CD8-positive, alpha-beta T cell (primary cell): ENCODE measurements at regions of chr9 and their contacts with region 1.

Region 1: GRCh38 chr9:114681594-114682332 is at the start of gene TEX48:
- DNase-seq: peak; percentile 48 to 89 (median 74)
- ATAC-seq: peak; percentile 89
- H3K4me3 ChIP-seq: no peak within 1 kb of the TSS
- H3K4me3 Mint-ChIP-seq: peak within 1 kb of the TSS; percentile 30
- H3K27ac ChIP-seq: no peak within 1 kb of the TSS
- H3K27ac Mint-ChIP-seq: peak within 1 kb of the TSS; percentile 25
- H3K4me1 ChIP-seq: peaks cover 5% of the 10 kb centered on the region
- H3K4me1 Mint-ChIP-seq: peaks cover 13% of the 10 kb centered on the region
- H3K27me3 ChIP-seq: peaks cover 0 to under 1% of the 10 kb centered on the region in 2 experiments
- H3K27me3 Mint-ChIP-seq: peaks cover 5% of the 10 kb centered on the region
- CTCF ChIP-seq: peak; percentile 58
- total RNA-seq, gene TEX48: not detected

Region 2: DNA sequence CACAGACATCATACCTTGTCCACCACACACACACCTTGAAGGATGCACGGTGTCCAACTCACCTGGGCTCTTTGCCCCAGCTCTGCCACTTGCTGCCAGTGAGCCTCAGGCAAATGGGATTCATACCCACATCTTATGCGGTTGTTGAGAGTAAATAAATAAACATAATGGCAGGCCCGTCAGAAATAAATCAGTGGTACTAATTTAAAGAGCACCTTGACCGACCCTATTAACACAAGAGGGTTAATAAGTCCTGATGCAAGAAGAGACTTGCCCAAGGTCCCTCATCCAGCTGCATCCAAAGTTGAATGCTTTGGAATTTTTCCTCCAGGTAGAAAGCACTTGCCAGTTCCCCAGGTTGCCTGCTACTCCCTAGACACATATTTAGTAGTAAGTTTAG is 282.4 kb before region 1 on chr9:
- CTCF ChIA-PET with region 1: no interaction called
- POLR2A ChIA-PET with region 1: no interaction called
- intact Hi-C with region 1: no loop called
- DNase-seq: no peak
- ATAC-seq: no peak
- H3K4me3 ChIP-seq: no peak overlapping the region
- H3K4me3 Mint-ChIP-seq: peak overlapping the region; percentile 15
- H3K27ac ChIP-seq: no peak overlapping the region
- H3K27ac Mint-ChIP-seq: no peak overlapping the region
- H3K4me1 ChIP-seq: peaks cover 33% of the 10 kb centered on the region
- H3K4me1 Mint-ChIP-seq: peaks cover 37% of the 10 kb centered on the region
- H3K27me3 ChIP-seq: no peaks in the 10 kb centered on the region
- H3K27me3 Mint-ChIP-seq: no peaks in the 10 kb centered on the region
- CTCF ChIP-seq: no peak

Region 3: GRCh38 chr9:114671605-114672004 is 10.2 kb before region 1 on chr9:
- CTCF ChIA-PET with region 1: interaction called, 21 read pairs
- POLR2A ChIA-PET with region 1: no interaction called
- intact Hi-C with region 1: no loop called
- DNase-seq: no peak
- ATAC-seq: no peak
- H3K4me3 ChIP-seq: no peak overlapping the region
- H3K4me3 Mint-ChIP-seq: no peak overlapping the region
- H3K27ac ChIP-seq: no peak overlapping the region
- H3K27ac Mint-ChIP-seq: no peak overlapping the region
- H3K4me1 ChIP-seq: no peaks in the 10 kb centered on the region
- H3K4me1 Mint-ChIP-seq: no peaks in the 10 kb centered on the region
- H3K27me3 ChIP-seq: no peaks in the 10 kb centered on the region
- H3K27me3 Mint-ChIP-seq: peaks cover 7% of the 10 kb centered on the region
- CTCF ChIP-seq: no peak

Region 4: DNA sequence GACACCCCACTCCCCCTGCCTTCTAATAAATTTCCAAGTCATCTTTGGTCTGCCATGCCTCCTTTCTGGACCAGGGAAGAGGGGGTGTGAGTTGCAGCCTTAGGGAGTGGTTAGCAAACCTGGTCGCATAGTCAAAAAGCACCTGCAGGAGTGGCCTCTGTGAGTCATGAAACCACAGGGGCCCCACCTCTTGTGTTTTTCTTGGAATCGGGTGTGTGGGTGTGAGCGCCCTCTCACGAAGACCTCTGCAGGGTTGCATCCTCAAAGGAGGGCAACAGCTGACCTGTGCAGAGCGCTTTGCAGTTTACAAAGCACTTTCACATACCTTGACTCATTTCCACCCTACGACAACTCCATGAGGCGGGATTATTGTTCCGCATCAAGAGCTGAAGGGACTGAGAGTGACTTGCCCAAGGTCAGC is 37.0 kb after region 1 on chr9:
- CTCF ChIA-PET with region 1: no interaction called
- POLR2A ChIA-PET with region 1: no interaction called
- intact Hi-C with region 1: loop called (anchors 5 kb)
- DNase-seq: peak; percentile 24 to 84 (median 75)
- ATAC-seq: peak; percentile 92
- H3K4me3 ChIP-seq: peak overlapping the region in 1 of 2 experiments; percentile 18
- H3K4me3 Mint-ChIP-seq: peak overlapping the region; percentile 27
- H3K27ac ChIP-seq: no peak overlapping the region
- H3K27ac Mint-ChIP-seq: peak overlapping the region; percentile 67
- H3K4me1 ChIP-seq: peaks cover 27% of the 10 kb centered on the region
- H3K4me1 Mint-ChIP-seq: peaks cover 37% of the 10 kb centered on the region
- H3K27me3 ChIP-seq: no peaks in the 10 kb centered on the region
- H3K27me3 Mint-ChIP-seq: no peaks in the 10 kb centered on the region
- CTCF ChIP-seq: no peak

Region 5: GRCh38 chr9:115013998-115014397 is 332.2 kb after region 1 on chr9:
- CTCF ChIA-PET with region 1: interaction called, 223 read pairs
- POLR2A ChIA-PET with region 1: no interaction called
- intact Hi-C with region 1: loop called (anchors 1 kb)
- DNase-seq: peak; percentile 60 to 86 (median 79)
- ATAC-seq: peak; percentile 79
- H3K4me3 ChIP-seq: no peak overlapping the region
- H3K4me3 Mint-ChIP-seq: no peak overlapping the region
- H3K27ac ChIP-seq: no peak overlapping the region
- H3K27ac Mint-ChIP-seq: no peak overlapping the region
- H3K4me1 ChIP-seq: peaks cover 7% of the 10 kb centered on the region
- H3K4me1 Mint-ChIP-seq: peaks cover 9% of the 10 kb centered on the region
- H3K27me3 ChIP-seq: no peaks in the 10 kb centered on the region
- H3K27me3 Mint-ChIP-seq: no peaks in the 10 kb centered on the region
- CTCF ChIP-seq: peak; percentile 89

Region 6: GRCh38 chr9:116661037-116661954 is 1979.5 kb after region 1 on chr9:
- CTCF ChIA-PET with region 1: no interaction called
- POLR2A ChIA-PET with region 1: no interaction called
- intact Hi-C with region 1: loop called in 1 of 2 experiments (anchors 10 kb)
- DNase-seq: peak in 2 of 9 experiments; percentile 51 to 58
- ATAC-seq: no peak
- H3K4me3 ChIP-seq: no peak overlapping the region
- H3K4me3 Mint-ChIP-seq: no peak overlapping the region
- H3K27ac ChIP-seq: no peak overlapping the region
- H3K27ac Mint-ChIP-seq: no peak overlapping the region
- H3K4me1 ChIP-seq: no peaks in the 10 kb centered on the region
- H3K4me1 Mint-ChIP-seq: no peaks in the 10 kb centered on the region
- H3K27me3 ChIP-seq: no peaks in the 10 kb centered on the region
- H3K27me3 Mint-ChIP-seq: no peaks in the 10 kb centered on the region
- CTCF ChIP-seq: peak; percentile 63